ENCODE measurements at regions of chr1 and their contacts with region 1.

Region 1: DNA sequence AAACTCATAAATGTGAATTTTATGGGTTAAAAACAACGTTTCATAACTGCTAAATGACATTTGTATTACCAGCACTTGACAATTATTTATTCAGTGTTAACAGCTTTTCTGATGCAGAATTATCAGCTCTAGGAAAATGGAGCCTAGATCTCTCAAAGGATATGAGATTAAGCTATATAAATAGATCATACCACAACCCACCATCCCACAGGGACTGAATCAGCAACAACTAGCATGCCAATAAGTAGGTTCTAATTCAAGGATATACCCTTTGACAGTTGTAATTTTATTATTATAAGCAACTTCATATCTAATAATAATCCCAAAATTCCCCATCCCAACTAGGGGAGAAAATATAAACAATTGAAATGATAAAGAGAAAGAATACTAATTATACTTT is 275.4 kb upstream of the RGS18 start:
- DNase-seq: no peak
- ATAC-seq: no peak
- H3K4me3 Mint-ChIP-seq: no peak overlapping the region
- H3K27ac Mint-ChIP-seq: no peak overlapping the region
- H3K4me1 Mint-ChIP-seq: no peaks in the 10 kb centered on the region
- H3K27me3 Mint-ChIP-seq: no peaks in the 10 kb centered on the region

Region 2: GRCh38 chr1:191831572-191831971 is 51.3 kb before region 1 on chr1:
- CTCF ChIA-PET with region 1: no interaction called
- POLR2A ChIA-PET with region 1: no interaction called
- intact Hi-C with region 1: loop called in 1 of 2 experiments (anchors 5 kb)
- DNase-seq: no peak
- ATAC-seq: no peak
- H3K4me3 Mint-ChIP-seq: no peak overlapping the region
- H3K27ac Mint-ChIP-seq: no peak overlapping the region
- H3K4me1 Mint-ChIP-seq: no peaks in the 10 kb centered on the region
- H3K27me3 Mint-ChIP-seq: no peaks in the 10 kb centered on the region

Region 3: DNA sequence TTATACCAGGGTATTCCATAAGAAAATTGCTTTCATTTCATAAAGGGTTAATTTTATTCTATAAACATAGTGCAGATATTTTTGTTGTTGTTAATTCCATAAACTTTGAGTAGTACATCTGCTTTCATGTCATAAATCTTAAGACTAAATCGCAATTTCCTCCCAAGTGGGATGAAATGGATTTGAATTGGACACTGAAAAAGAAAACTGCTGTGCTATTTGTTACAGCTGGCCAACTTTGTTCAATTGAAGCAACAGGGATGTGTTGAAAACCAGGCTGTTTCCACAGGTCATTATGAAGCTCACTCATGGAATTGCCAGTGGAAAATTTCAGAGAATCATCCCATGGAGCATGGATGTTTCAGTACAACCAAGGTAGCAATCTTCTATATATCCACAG is 22.9 kb after region 1 on chr1:
- CTCF ChIA-PET with region 1: no interaction called
- POLR2A ChIA-PET with region 1: no interaction called
- intact Hi-C with region 1: no loop called
- DNase-seq: no peak
- ATAC-seq: no peak
- H3K4me3 Mint-ChIP-seq: no peak overlapping the region
- H3K27ac Mint-ChIP-seq: no peak overlapping the region
- H3K4me1 Mint-ChIP-seq: no peaks in the 10 kb centered on the region
- H3K27me3 Mint-ChIP-seq: no peaks in the 10 kb centered on the region

Measured in activated CD4-positive, alpha-beta T cell treated with anti-CD3 and anti-CD28 coated beads for 36 hours (primary cell).